ENCODE measurements at regions of chr2 and their contacts with region 1.

Region 1: GRCh38 chr2:9813312-9814133 is 29.8 kb upstream of the TAF1B start:
- DNase-seq: peak; percentile 72
- H3K4me3 Mint-ChIP-seq: no peak overlapping the region
- H3K27ac Mint-ChIP-seq: no peak overlapping the region
- H3K4me1 Mint-ChIP-seq: peaks cover 19% of the 10 kb centered on the region
- H3K27me3 Mint-ChIP-seq: peaks cover 11% of the 10 kb centered on the region

Region 2: DNA sequence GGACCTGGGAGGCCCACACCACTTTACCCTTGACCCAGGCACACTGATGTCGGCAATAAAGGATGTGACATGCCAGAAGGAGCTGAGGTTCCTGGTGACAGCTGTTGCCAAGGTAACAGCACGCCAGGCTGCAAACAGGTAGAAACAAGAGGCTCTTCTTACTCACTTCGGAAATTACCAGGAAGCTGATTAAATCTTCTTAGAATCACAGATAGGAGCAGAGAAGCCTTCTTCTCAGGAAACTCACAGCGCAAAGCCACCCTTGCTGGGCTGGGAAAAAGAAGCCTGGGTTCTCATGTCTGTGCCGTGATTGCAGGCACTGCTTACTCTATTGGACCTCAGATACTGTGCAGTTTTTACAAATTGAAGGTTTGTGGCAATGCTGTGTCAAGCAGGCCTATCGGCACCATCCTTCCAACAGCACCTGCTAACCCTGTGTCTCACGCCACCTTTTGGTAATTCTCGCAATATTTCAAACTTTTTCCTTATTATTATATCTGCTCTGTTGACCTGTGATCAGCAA is 31.3 kb before region 1 on chr2:
- CTCF ChIA-PET with region 1: interaction called, 11 read pairs
- POLR2A ChIA-PET with region 1: no interaction called
- DNase-seq: peak; percentile 86
- H3K4me3 Mint-ChIP-seq: peak overlapping the region; percentile 40
- H3K27ac Mint-ChIP-seq: peak overlapping the region; percentile 91
- H3K4me1 Mint-ChIP-seq: peaks cover 64% of the 10 kb centered on the region
- H3K27me3 Mint-ChIP-seq: peaks cover 2% of the 10 kb centered on the region

Region 3: GRCh38 chr2:9799665-9800632 is 13.6 kb before region 1 on chr2:
- CTCF ChIA-PET with region 1: interaction called, 106 read pairs
- POLR2A ChIA-PET with region 1: no interaction called
- DNase-seq: peak; percentile 86
- H3K4me3 Mint-ChIP-seq: peak overlapping the region; percentile 60
- H3K27ac Mint-ChIP-seq: peak overlapping the region; percentile 91
- H3K4me1 Mint-ChIP-seq: peaks cover 34% of the 10 kb centered on the region
- H3K27me3 Mint-ChIP-seq: peaks cover 5% of the 10 kb centered on the region

Region 4: GRCh38 chr2:9843229-9844035 is 29.9 kb after region 1 on chr2 and contains the start of gene TAF1B:
- CTCF ChIA-PET with region 1: interaction called, 13 read pairs
- POLR2A ChIA-PET with region 1: no interaction called
- DNase-seq: peak; percentile 88
- H3K4me3 Mint-ChIP-seq: peak within 1 kb of the TSS; percentile 94
- H3K27ac Mint-ChIP-seq: peak within 1 kb of the TSS; percentile 92
- H3K4me1 Mint-ChIP-seq: peaks cover 51% of the 10 kb centered on the region
- H3K27me3 Mint-ChIP-seq: peaks cover 2% of the 10 kb centered on the region
- total RNA-seq, gene TAF1B: 30.6 to 36.2 TPM

Region 5: DNA sequence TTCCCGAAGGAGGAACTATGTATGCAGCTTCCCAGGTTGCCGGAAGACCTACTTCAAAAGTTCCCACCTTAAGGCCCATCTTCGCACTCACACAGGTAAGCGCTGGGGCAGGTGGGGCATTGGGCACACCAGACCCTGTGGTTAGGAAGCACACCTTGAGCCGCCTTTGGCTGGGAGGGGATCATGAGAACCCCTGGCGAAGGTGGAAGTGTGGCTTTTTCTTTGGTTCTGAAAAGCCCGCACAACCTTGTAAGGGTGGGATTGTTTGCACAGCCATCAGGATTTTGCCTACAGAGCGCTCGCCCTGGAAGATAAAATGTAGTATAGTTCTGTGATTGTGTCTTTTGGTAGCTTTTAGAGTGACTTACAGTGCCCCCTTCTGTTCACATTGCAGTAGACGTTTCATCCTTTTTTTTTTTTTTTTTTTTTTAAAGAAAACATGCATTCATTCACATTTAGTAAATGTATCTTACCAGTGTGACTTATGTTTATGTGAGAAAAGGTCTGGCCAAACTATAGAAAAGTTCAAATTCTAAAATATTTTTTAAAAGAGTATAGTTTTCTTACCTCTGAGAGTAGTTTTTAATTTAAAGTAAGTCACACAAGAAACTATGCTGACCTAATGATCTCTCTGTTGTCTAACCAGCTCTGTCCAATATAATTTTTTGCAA is 235.1 kb after region 1 on chr2:
- CTCF ChIA-PET with region 1: interaction called, 17 read pairs
- POLR2A ChIA-PET with region 1: no interaction called
- DNase-seq: peak; percentile 54
- H3K4me3 Mint-ChIP-seq: no peak overlapping the region
- H3K27ac Mint-ChIP-seq: no peak overlapping the region
- H3K4me1 Mint-ChIP-seq: peaks cover 19% of the 10 kb centered on the region
- H3K27me3 Mint-ChIP-seq: no peaks in the 10 kb centered on the region

Region 6: GRCh38 chr2:10091182-10091888 is 277.8 kb after region 1 on chr2:
- CTCF ChIA-PET with region 1: no interaction called
- POLR2A ChIA-PET with region 1: no interaction called
- DNase-seq: peak; percentile 31
- H3K4me3 Mint-ChIP-seq: peak overlapping the region; percentile 57
- H3K27ac Mint-ChIP-seq: peak overlapping the region; percentile 63
- H3K4me1 Mint-ChIP-seq: peaks cover 13% of the 10 kb centered on the region
- H3K27me3 Mint-ChIP-seq: peaks cover 70% of the 10 kb centered on the region

Measured in activated CD4-positive, alpha-beta T cell treated with anti-CD3 and anti-CD28 coated beads, Interleukin-2, amount 10 ng/mL, durations not matched to agents 7 days and 5 days (primary cell).